MCF 10A (cell line): ENCODE measurements at regions of chr2 and their contacts with region 1.

Region 1: GRCh38 chr2:70789304-70790135 is 923 bp downstream of the FIGLA start:
- DNase-seq: peak; percentile 63
- H3K4me3 Mint-ChIP-seq: peak overlapping the region; percentile 52
- H3K27ac Mint-ChIP-seq: no peak overlapping the region
- H3K4me1 Mint-ChIP-seq: peaks cover 5% of the 10 kb centered on the region
- H3K27me3 Mint-ChIP-seq: peaks cover 56% of the 10 kb centered on the region
- CTCF ChIP-seq: peak; percentile 53

Region 2: GRCh38 chr2:70321370-70321769 is 468.1 kb before region 1 on chr2:
- CTCF ChIA-PET with region 1: no interaction called
- POLR2A ChIA-PET with region 1: no interaction called
- intact Hi-C with region 1: no loop called
- DNase-seq: peak; percentile 25
- H3K4me3 Mint-ChIP-seq: no peak overlapping the region
- H3K27ac Mint-ChIP-seq: no peak overlapping the region
- H3K4me1 Mint-ChIP-seq: no peaks in the 10 kb centered on the region
- H3K27me3 Mint-ChIP-seq: no peaks in the 10 kb centered on the region
- CTCF ChIP-seq: no peak

Region 3: GRCh38 chr2:70686577-70687460 is 102.7 kb before region 1 on chr2:
- CTCF ChIA-PET with region 1: interaction called, 5 read pairs
- POLR2A ChIA-PET with region 1: interaction called, 3 read pairs
- intact Hi-C with region 1: loop called (anchors 1 kb)
- DNase-seq: peak; percentile 81
- H3K4me3 Mint-ChIP-seq: no peak overlapping the region
- H3K27ac Mint-ChIP-seq: no peak overlapping the region
- H3K4me1 Mint-ChIP-seq: peaks cover 11% of the 10 kb centered on the region
- H3K27me3 Mint-ChIP-seq: peaks cover 28% of the 10 kb centered on the region
- CTCF ChIP-seq: peak; percentile 41

Region 4: DNA sequence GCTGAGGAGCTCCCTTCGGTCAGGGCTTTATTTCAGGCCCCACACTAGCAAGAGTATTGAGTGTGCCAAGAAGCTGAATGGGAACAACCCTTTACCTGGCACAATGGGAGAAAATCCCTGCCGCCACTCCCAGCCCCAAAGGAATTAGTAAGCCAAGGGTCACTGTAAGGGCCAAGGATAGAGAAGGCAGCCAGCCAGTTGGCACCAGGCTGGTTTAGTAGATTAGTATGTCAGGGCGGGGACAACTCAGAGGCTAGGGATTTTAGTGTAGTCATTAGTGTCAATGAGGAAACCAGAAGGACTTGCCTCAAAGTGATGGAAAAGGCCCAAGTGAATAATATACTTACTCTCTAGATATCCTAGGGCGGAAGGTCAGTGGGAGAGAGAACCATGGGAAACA is 1393.0 kb after region 1 on chr2:
- CTCF ChIA-PET with region 1: no interaction called
- POLR2A ChIA-PET with region 1: no interaction called
- intact Hi-C with region 1: no loop called
- DNase-seq: peak; percentile 75
- H3K4me3 Mint-ChIP-seq: no peak overlapping the region
- H3K27ac Mint-ChIP-seq: no peak overlapping the region
- H3K4me1 Mint-ChIP-seq: peaks cover 8% of the 10 kb centered on the region
- H3K27me3 Mint-ChIP-seq: no peaks in the 10 kb centered on the region
- CTCF ChIP-seq: no peak